CD4-positive, alpha-beta memory T cell (primary cell): ENCODE measurements at regions of chr2 and their contacts with region 1.

Region 1: DNA sequence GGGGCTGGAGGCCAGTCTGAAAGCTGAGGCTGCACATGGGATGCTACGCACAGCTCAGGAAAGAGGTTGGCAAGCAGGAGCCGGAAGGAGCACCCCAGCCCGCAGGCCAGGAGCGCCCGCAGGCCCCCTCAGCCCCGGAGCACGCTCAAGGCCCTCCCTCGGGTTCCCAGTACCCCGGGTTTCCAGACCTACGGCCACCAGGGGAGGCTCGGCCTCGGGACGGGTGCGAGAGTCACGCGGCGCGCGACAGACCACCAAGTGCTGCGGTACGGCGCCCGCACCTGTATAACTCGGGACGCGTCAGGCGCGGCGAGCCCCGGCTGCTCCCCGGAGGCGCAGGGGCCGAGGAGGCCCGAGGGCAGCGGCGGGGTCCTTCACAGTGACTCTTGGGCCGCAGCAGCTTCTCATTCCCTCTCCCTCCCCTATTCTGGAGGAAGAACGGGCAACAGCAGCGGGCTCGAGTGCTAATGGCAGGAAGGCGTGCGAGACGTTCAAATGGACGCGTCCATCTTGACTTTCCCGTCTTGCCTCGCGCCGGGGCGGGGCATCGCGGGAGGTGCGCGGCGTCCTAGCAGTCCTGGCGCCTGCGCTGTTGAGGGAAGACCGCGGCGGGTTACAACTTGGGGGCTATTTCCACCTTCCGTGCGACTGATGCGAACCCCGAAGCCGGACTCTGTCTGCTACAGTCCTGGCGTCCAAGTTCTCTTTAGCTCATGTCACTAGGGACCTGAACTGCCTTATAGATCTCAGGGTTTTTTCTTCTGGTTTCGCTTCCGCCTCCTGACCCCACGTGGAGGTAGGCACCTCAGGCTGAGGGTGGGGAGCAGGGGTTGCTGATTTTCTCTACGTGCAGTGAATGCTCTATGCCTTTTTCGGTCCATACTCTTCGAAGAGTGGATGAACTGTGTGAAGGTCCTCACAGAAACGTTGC is at the start of gene ANAPC1:
- DNase-seq: peak; percentile 81 to 87 (median 84)
- H3K4me3 ChIP-seq: peak within 1 kb of the TSS; percentile 77
- H3K4me3 Mint-ChIP-seq: peak within 1 kb of the TSS; percentile 90 to 96 (median 93)
- H3K27ac ChIP-seq: peak within 1 kb of the TSS; percentile 82
- H3K27ac Mint-ChIP-seq: peak within 1 kb of the TSS; percentile 85 to 99 (median 96)
- H3K4me1 ChIP-seq: peaks cover 15% of the 10 kb centered on the region
- H3K4me1 Mint-ChIP-seq: peaks cover 4 to 12% (median 10%) of the 10 kb centered on the region in 4 donors
- H3K27me3 ChIP-seq: no peaks in the 10 kb centered on the region
- H3K27me3 Mint-ChIP-seq: no peaks in the 10 kb centered on the region
- total RNA-seq, gene ANAPC1: 58.1 to 60.2 TPM

Region 2: GRCh38 chr2:111617299-111618225 is 266.4 kb before region 1 on chr2:
- CTCF ChIA-PET with region 1: no interaction called
- POLR2A ChIA-PET with region 1: no interaction called
- intact Hi-C with region 1: no loop called
- DNase-seq: no peak
- H3K4me3 ChIP-seq: no peak overlapping the region
- H3K4me3 Mint-ChIP-seq: no peak overlapping the region
- H3K27ac ChIP-seq: no peak overlapping the region
- H3K27ac Mint-ChIP-seq: no peak overlapping the region
- H3K4me1 ChIP-seq: no peaks in the 10 kb centered on the region
- H3K4me1 Mint-ChIP-seq: no peaks in the 10 kb centered on the region
- H3K27me3 ChIP-seq: no peaks in the 10 kb centered on the region
- H3K27me3 Mint-ChIP-seq: peaks cover 0 to 1% of the 10 kb centered on the region in 2 donors

Region 3: GRCh38 chr2:112048887-112049286 is 165.0 kb after region 1 on chr2:
- CTCF ChIA-PET with region 1: interaction called, 37 read pairs
- POLR2A ChIA-PET with region 1: no interaction called
- intact Hi-C with region 1: loop called (anchors 1 kb)
- DNase-seq: peak; percentile 49 to 63 (median 55)
- H3K4me3 ChIP-seq: no peak overlapping the region
- H3K4me3 Mint-ChIP-seq: no peak overlapping the region
- H3K27ac ChIP-seq: no peak overlapping the region
- H3K27ac Mint-ChIP-seq: no peak overlapping the region
- H3K4me1 ChIP-seq: peaks cover 7% of the 10 kb centered on the region
- H3K4me1 Mint-ChIP-seq: peaks cover 7 to 12% (median 8%) of the 10 kb centered on the region in 4 donors
- H3K27me3 ChIP-seq: no peaks in the 10 kb centered on the region
- H3K27me3 Mint-ChIP-seq: peaks cover 2 to 9% of the 10 kb centered on the region in 2 donors

Region 4: GRCh38 chr2:112275306-112275886 is 391.5 kb after region 1 on chr2 and contains the start of gene ZC3H6:
- CTCF ChIA-PET with region 1: no interaction called
- POLR2A ChIA-PET with region 1: no interaction called
- intact Hi-C with region 1: loop called (anchors 5 kb)
- DNase-seq: peak; percentile 97 to 100 (median 99)
- H3K4me3 ChIP-seq: peak within 1 kb of the TSS; percentile 90 to 97
- H3K4me3 Mint-ChIP-seq: peak within 1 kb of the TSS; percentile 91 to 97 (median 94)
- H3K27ac ChIP-seq: peak within 1 kb of the TSS; percentile 100
- H3K27ac Mint-ChIP-seq: peak within 1 kb of the TSS; percentile 97 to 100 (median 99)
- H3K4me1 ChIP-seq: peaks cover 28% of the 10 kb centered on the region
- H3K4me1 Mint-ChIP-seq: peaks cover 11 to 46% (median 19%) of the 10 kb centered on the region in 4 donors
- H3K27me3 ChIP-seq: no peaks in the 10 kb centered on the region
- H3K27me3 Mint-ChIP-seq: no peaks in the 10 kb centered on the region
- total RNA-seq, gene ZC3H6: 36.8 to 43.2 TPM